CD4-positive, alpha-beta memory T cell (primary cell): ENCODE measurements at regions of chr10 and their contacts with region 1.

Region 1: DNA sequence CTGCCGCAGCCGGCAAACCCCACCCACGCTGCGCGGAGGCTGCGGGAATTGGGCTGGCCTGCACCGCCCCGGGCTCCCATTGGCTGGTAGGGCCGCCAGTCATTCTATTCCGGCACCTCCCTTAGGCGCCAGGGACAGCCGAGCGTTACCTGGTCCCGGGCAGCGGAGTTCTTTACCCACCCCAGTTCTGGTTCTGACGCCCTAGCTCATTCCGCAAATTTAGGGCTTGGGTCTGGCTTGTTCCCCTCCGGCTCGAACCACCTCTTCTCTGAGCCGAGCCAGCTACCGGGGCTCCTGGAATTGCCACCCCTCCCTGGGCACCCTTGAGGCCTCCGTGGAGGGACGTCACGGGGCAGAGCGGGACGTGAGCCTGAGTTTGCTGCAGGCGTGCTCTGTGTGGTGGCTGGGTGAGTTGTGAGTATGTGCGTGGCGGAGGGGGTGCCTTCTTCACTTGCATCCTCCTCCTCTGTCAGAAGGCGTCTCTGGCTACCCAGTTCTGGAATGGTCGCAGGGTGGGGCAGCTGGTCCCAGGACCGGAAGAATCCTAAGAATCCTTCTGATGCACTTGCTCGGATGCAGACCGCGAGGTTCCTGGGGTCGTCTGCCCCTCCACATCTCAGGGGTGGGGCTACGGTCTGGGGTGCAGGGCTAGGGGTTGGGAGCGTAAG is at the starts of genes PDZD7 and SFXN3:
- DNase-seq: peak; percentile 95 to 96 (median 96)
- H3K4me3 ChIP-seq: peak within 1 kb of the TSS; percentile 95 to 99
- H3K4me3 Mint-ChIP-seq: peak within 1 kb of the TSS; percentile 92 to 100 (median 96)
- H3K27ac ChIP-seq: peak within 1 kb of the TSS; percentile 92
- H3K27ac Mint-ChIP-seq: peak within 1 kb of the TSS; percentile 93 to 100 (median 99)
- H3K4me1 ChIP-seq: peaks cover 20% of the 10 kb centered on the region
- H3K4me1 Mint-ChIP-seq: peaks cover 10 to 34% (median 15%) of the 10 kb centered on the region in 4 donors
- H3K27me3 ChIP-seq: no peaks in the 10 kb centered on the region
- H3K27me3 Mint-ChIP-seq: no peaks in the 10 kb centered on the region
- total RNA-seq, gene PDZD7: 1.1 to 1.8 TPM
- total RNA-seq, gene SFXN3: 118 to 123 TPM

Region 2: DNA sequence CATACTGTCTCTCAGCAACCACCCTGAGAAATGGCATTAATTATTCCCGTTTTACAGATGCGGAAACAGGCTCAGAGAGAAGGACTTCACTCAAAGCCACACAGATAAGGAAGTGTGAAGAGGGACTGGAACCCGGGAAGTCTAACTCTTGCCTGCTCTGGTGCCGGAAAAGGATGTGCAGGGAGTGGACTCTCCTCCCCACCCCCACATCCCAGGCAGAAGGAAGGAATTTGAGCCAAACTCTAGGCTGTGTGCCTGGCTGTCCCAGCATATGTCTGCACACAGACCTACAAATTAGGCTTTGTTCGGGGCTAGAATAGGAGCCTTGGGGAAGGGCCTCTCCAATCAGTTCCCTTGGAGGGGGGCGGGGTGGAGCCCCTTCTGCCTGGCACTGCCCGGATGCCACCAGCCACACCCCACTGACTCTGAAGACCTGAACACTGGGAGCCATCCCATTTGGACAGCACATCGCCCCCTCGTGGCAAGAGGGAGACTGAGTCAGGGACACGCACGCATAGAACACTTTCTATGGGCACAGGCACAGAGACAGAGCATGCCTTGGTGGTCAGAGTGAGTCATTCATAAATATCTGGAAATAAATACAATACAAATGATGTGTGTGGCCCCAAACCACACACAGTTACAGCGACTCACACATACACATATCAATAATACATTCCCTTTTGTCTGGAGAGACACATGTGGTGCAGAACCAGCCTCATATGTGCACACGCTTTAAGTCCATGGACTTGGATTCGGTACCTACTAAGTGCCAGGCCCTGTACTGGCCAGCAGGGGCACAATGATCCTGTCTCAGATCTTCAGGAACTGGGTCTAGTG is 18.5 kb before region 1 on chr10:
- CTCF ChIA-PET with region 1: interaction called, 25 read pairs
- POLR2A ChIA-PET with region 1: interaction called, 13 read pairs
- intact Hi-C with region 1: loop called (anchors 1 kb)
- DNase-seq: peak; percentile 51 to 72 (median 65)
- H3K4me3 ChIP-seq: no peak overlapping the region
- H3K4me3 Mint-ChIP-seq: no peak overlapping the region
- H3K27ac ChIP-seq: no peak overlapping the region
- H3K27ac Mint-ChIP-seq: peak overlapping the region in 3 of 7 donors; percentile 2 to 67 (median 61)
- H3K4me1 ChIP-seq: peaks cover 19% of the 10 kb centered on the region
- H3K4me1 Mint-ChIP-seq: peaks cover 10 to 15% (median 13%) of the 10 kb centered on the region in 4 donors
- H3K27me3 ChIP-seq: peaks cover 11% of the 10 kb centered on the region
- H3K27me3 Mint-ChIP-seq: peaks cover 20 to 23% of the 10 kb centered on the region in 2 donors

Region 3: DNA sequence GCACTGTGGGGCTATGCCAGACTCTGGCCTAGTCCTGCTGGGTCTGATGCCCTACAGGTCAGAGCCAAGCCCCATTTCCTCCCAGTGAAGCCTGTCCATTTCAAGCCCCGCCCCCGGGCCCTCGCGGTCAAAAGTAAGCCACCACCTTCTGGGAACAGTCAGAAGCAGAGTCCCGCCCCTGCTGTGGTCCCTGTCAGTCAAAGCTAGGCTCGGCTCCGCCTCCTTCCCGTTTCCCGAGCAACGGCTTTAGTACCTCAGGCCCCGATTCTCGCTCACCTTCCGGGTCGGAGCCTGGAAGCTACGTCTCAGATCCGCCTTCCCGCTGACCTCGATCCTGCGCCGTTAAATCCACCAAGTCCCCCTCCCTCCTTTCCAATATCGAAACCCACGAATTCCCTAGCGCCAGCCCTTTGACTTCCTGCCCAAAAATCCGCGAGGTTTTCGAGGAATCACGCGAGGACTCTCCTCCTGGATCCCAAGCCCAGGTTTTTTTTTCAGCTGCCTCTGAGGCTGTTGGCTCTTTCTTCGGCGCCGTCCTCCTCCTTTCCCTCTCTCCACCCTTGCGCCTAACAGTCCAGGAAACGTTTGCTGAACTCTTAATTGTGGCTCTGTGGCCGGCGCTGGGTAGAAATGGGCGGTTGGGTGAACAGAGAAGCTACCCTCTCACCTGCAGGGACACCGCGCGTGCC is 11.5 kb after region 1 on chr10:
- CTCF ChIA-PET with region 1: interaction called, 60 read pairs
- POLR2A ChIA-PET with region 1: interaction called, 69 read pairs
- intact Hi-C with region 1: loop called (anchors 1 kb)
- DNase-seq: peak; percentile 64 to 84 (median 68)
- H3K4me3 ChIP-seq: peak overlapping the region; percentile 81 to 94
- H3K4me3 Mint-ChIP-seq: peak overlapping the region; percentile 92 to 99 (median 97)
- H3K27ac ChIP-seq: peak overlapping the region; percentile 68
- H3K27ac Mint-ChIP-seq: peak overlapping the region; percentile 87 to 99 (median 97)
- H3K4me1 ChIP-seq: peaks cover 27% of the 10 kb centered on the region
- H3K4me1 Mint-ChIP-seq: peaks cover 16 to 25% (median 19%) of the 10 kb centered on the region in 4 donors
- H3K27me3 ChIP-seq: peaks cover under 1% of the 10 kb centered on the region
- H3K27me3 Mint-ChIP-seq: peaks cover 11 to 12% of the 10 kb centered on the region in 2 donors

Region 4: DNA sequence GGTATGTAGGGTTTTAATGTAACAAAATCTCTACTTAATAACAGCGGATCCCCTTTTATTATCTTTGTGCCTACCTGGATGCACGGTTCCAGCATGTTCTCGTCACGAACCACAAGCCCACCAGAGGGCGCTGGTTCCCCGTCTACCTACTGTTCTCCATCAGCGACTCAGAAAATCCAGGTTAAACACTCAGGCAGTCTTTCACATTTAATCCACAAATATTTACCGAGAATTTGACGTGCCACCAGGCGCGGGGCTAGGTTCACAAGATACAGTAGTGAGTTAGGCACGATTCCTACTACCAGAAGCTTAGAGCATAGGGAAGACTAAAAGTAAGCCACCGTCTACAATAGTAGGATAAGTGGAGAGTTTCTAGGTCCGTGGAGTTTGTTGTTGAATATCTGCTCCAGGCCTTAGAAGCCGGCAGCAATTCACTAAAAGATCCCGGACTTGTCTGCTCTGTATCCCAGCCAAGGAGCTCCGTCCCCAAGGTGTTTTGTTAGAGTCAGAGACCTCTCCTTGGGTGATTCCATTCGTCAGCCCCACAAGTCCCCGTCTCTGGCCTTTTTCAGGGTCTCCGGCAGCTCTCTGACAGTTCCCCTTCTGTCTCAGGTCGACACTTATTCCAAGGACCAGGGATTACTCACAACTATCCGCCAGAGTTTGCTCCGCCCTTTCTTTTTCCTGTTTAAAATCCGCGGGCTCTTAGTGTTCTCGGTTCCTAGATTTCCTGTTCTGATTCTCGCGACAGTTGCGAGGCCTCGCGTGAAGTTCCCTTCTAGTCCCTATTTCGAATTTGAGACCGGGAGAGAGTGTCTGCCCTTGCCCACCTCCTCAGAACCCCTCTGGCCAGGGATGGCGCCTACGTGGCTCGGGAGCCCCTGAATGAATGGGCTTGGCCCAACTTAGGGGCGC is 29.0 kb after region 1 on chr10:
- CTCF ChIA-PET with region 1: interaction called, 645 read pairs
- POLR2A ChIA-PET with region 1: interaction called, 17 read pairs
- intact Hi-C with region 1: loop called (anchors 1 kb)
- DNase-seq: peak; percentile 80 to 98 (median 94)
- H3K4me3 ChIP-seq: peak overlapping the region; percentile 99 to 100
- H3K4me3 Mint-ChIP-seq: peak overlapping the region; percentile 92 to 98 (median 95)
- H3K27ac ChIP-seq: peak overlapping the region; percentile 92
- H3K27ac Mint-ChIP-seq: peak overlapping the region; percentile 88 to 99 (median 98)
- H3K4me1 ChIP-seq: peaks cover 28% of the 10 kb centered on the region
- H3K4me1 Mint-ChIP-seq: peaks cover 14 to 35% (median 22%) of the 10 kb centered on the region in 4 donors
- H3K27me3 ChIP-seq: peaks cover 23% of the 10 kb centered on the region
- H3K27me3 Mint-ChIP-seq: peaks cover 14 to 17% of the 10 kb centered on the region in 2 donors